Activated T-helper 2 cell treated with anti-CD3 and anti-CD28 coated beads, Interferon-gamma antibody, Interleukin-2, Interleukin-4, amounts not matched to agents 10 μg/mL and 5 μg/mL and 100 μg/mL, durations not matched to agents 14 hours and 24 hours and 36 hours (primary cell): ENCODE measurements at regions of chr14 and their contacts with region 1.

Region 1: GRCh38 chr14:89618811-89619551 is 201.9 kb upstream of the FOXN3 start:
- DNase-seq: peak; percentile 71
- H3K4me3 Mint-ChIP-seq: peak overlapping the region; percentile 94
- H3K27ac Mint-ChIP-seq: peak overlapping the region; percentile 97
- H3K4me1 Mint-ChIP-seq: peaks cover 63% of the 10 kb centered on the region
- H3K27me3 Mint-ChIP-seq: no peaks in the 10 kb centered on the region

Region 2: DNA sequence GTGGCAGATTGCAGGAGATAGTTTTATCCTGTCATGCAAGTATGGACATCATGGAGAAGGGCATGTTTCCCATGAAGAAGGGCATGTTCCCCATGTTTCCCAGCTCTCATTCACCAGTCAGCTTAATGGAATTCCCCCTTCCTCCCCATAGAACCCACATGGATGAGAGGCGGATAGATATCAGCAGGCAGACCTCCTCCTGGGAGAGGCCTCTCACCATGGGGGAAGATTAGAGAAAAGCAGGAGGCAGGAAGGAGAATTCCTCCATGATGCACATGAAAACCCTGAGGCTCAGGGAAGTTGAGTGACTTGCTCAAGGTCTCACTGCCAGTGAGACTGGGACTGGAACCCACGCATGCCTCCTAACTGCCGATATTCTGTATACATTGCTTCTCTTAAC is 109.1 kb before region 1 on chr14:
- intact Hi-C with region 1: loop called (anchors 2 kb)
- DNase-seq: no peak
- H3K4me3 Mint-ChIP-seq: peak overlapping the region; percentile 74
- H3K27ac Mint-ChIP-seq: peak overlapping the region; percentile 96
- H3K4me1 Mint-ChIP-seq: peaks cover 58% of the 10 kb centered on the region
- H3K27me3 Mint-ChIP-seq: no peaks in the 10 kb centered on the region

Region 3: DNA sequence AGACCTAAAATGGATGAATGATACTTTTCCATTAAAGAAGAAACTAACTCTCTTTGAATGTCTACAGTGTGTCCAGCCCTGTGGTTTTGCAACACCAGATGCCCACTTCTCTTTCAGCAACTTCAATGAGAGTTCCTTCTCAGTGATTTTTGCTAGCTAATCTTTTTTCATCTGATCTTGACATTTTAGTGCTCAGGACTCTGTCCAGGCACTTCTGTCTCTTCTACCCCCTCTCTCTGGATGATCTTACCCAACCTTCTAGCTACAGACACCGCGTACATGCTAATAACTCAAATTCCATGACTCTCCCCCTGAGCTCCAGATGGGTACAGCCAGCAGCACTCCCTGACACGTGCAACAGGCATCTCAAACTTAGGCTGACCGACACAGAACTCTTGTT is 40.8 kb before region 1 on chr14:
- intact Hi-C with region 1: no loop called
- DNase-seq: no peak
- H3K4me3 Mint-ChIP-seq: no peak overlapping the region
- H3K27ac Mint-ChIP-seq: no peak overlapping the region
- H3K4me1 Mint-ChIP-seq: peaks cover 3% of the 10 kb centered on the region
- H3K27me3 Mint-ChIP-seq: no peaks in the 10 kb centered on the region

Region 4: DNA sequence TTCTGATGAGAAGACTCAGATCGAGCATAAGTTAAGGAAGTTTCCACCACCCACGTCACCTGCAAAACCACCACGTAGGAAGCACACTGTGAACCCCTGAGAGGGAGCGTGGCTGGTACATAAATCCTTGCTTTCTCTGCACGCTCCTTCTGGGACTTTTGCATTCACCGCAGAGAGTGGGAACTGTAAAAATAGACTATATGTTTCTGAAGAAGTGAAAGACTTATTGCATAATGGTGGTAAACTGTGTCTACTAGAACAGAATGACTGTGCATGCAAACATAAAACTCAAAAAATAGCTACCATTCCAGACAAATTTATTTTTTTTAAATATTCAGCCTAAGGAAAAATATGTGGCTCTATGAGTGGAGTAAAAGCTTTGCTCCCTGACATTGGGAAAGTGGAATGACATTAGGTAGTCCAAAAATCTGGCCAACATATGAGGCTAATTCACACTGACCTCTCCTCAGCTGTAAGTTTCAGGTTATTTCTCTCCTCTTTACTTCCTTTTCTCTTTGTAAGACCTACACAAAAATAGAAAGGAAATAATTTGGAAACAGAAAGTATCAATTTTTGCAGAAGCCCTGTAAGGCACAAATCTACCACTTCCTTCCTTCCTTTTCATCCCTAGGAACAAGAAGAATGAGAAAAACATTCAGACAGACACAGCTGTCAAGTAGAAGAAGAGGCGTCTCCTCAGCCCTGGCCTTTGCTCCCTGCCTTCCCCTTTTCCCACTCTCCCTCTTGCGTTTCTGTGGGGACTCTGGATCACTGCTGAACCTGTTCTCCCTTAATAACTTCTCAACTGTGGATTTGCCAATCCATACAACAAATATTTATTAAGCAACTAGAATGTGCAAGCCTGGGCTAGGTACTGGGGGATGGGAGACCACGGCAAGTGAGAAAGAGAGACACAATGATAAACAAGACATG is 62.4 kb after region 1 on chr14:
- intact Hi-C with region 1: loop called (anchors 1 kb)
- DNase-seq: peak; percentile 26
- H3K4me3 Mint-ChIP-seq: peak overlapping the region; percentile 53
- H3K27ac Mint-ChIP-seq: peak overlapping the region; percentile 88
- H3K4me1 Mint-ChIP-seq: peaks cover 38% of the 10 kb centered on the region
- H3K27me3 Mint-ChIP-seq: no peaks in the 10 kb centered on the region

Region 5: DNA sequence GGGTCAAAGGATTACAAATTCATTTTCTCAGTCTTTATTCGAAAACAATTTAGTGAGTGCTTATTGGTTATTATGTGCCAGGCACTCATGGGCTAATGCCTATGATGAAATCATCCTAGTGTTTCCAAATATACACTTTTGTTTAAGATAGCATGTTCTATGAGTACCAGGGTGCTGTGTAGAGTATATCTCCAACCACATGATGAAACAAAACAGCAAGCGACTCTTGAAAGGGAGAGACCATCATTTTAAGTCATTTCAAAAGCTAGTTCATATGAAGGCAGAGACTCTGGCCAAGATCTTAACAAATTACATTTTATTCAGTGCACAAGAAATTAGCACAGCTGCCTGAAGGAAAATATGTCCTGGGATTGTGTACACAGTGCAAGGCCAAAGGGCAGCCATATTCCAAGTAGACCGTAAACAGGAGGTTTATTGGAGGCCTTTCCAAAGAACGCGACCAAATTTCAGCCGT is 131.3 kb after region 1 on chr14:
- intact Hi-C with region 1: loop called (anchors 1 kb)
- DNase-seq: no peak
- H3K4me3 Mint-ChIP-seq: no peak overlapping the region
- H3K27ac Mint-ChIP-seq: peak overlapping the region; percentile 86
- H3K4me1 Mint-ChIP-seq: peaks cover 56% of the 10 kb centered on the region
- H3K27me3 Mint-ChIP-seq: no peaks in the 10 kb centered on the region

Region 6: DNA sequence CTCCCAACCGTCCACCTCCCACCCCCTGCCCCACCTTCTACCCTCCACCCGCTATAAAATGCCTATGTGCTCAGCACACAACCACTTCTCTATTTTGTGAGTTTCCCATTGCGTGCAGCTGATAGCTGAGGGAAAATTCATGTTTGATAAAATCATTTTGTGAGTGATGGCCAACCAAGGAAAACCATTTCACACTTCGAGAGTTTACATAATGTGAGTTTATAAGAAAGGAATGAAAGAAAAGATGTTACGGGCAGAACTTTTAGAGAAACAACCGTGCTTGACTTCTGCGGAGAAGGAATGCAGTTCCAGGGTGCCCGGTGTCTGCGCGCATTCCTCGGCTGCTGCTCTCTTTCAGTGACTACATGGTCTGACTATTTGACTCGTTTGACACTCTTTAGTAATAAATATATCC is 194.6 kb after region 1 on chr14:
- intact Hi-C with region 1: no loop called
- DNase-seq: no peak
- H3K4me3 Mint-ChIP-seq: no peak overlapping the region
- H3K27ac Mint-ChIP-seq: no peak overlapping the region
- H3K4me1 Mint-ChIP-seq: no peaks in the 10 kb centered on the region
- H3K27me3 Mint-ChIP-seq: peaks cover 33% of the 10 kb centered on the region

Region 7: GRCh38 chr14:89899917-89900663 is 281.1 kb after region 1 on chr14:
- intact Hi-C with region 1: loop called (anchors 10 kb)
- DNase-seq: no peak
- H3K4me3 Mint-ChIP-seq: no peak overlapping the region
- H3K27ac Mint-ChIP-seq: no peak overlapping the region
- H3K4me1 Mint-ChIP-seq: peaks cover 13% of the 10 kb centered on the region
- H3K27me3 Mint-ChIP-seq: peaks cover 8% of the 10 kb centered on the region